ENCODE measurements at regions of chr4 and their contacts with region 1.

Region 1: DNA sequence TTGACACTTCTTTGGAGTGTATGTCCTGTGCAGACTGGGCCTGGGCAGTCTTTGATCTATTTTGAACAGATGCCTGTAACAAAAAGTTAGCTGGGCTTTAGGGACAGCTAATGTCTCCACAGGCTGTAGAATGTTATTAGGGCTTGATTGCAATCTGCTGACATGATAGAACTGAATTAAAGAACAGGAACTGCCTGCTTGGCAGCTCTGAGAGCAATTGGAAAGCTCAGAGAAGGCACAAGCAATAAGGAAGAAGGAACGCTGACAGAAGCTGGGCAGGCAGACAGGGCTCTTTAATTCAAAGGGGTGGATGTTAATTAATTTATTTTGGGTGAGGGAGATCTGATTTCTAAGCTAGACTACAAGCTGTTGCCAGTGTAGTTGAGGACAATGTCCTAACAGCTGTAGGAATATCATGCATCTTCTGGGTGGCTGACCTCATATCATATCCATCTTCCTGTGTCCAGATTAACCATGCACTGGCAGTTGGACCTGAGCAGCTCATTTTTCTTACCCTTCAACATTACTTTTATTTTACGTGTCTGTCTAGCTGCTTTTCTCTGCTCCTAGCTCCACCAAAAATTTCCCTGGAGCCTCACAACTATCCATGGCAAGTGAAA is 20.7 kb upstream of the GRXCR1 start:
- DNase-seq: no peak
- ATAC-seq: no peak
- H3K4me3 ChIP-seq: no peak overlapping the region
- H3K27ac ChIP-seq: no peak overlapping the region
- H3K4me1 ChIP-seq: no peaks in the 10 kb centered on the region
- H3K27me3 ChIP-seq: no peaks in the 10 kb centered on the region
- CTCF ChIP-seq: no peak
- EP300 ChIP-seq: no peak
- POLR2A ChIP-seq: no peak
- RAD21 ChIP-seq: no peak

Region 2: DNA sequence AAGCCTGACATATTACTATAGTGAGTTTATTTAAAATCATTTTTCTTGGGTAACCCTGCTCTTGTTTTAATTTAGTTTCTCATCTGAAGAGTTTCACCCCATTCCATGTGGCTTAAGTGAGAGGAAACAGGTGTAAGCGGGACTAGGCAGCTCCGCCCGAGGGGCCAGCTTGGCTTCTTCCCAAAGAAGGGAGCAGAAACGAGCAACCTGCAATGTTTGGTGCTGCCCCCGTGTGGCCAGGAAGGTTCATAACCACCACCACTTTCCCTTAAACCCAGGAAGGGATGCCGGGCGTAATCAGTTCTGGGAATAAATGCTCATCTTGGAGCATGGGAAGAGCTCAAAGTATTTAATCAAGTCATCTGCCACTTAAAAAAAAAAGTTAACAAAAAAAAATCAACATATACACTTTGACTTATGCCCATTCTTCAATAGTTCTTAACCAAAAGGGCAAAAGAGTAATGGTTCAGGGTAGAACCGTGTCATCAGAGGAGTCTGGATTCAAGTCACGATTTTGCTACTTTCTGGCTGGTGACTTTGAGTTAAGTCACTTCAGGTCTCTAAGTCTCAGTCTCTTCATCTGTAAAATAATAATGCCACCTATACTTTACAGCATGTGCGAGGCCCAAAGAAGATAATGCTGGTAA is 1974.1 kb before region 1 on chr4:
- CTCF ChIA-PET with region 1: no interaction called
- POLR2A ChIA-PET with region 1: no interaction called
- in situ Hi-C with region 1: no loop called
- intact Hi-C with region 1: no loop called
- DNase-seq: peak; percentile 73 to 82 (median 77)
- ATAC-seq: peak; percentile 96
- H3K4me3 ChIP-seq: no peak overlapping the region
- H3K27ac ChIP-seq: no peak overlapping the region
- H3K4me1 ChIP-seq: no peaks in the 10 kb centered on the region
- H3K27me3 ChIP-seq: peaks cover 9 to 21% of the 10 kb centered on the region in 2 experiments; a peak in 4 of 5 replicates
- CTCF ChIP-seq: peak; percentile 67 to 84 (median 75)
- EP300 ChIP-seq: no peak
- POLR2A ChIP-seq: no peak
- RAD21 ChIP-seq: peak; percentile 45 to 60

Region 3: GRCh38 chr4:42568610-42569207 is 303.1 kb before region 1 on chr4:
- CTCF ChIA-PET with region 1: no interaction called
- POLR2A ChIA-PET with region 1: no interaction called
- in situ Hi-C with region 1: loop called (anchors 10 kb)
- intact Hi-C with region 1: no loop called
- DNase-seq: peak; percentile 30 to 73 (median 38)
- ATAC-seq: peak; percentile 94
- H3K4me3 ChIP-seq: no peak overlapping the region
- H3K27ac ChIP-seq: no peak overlapping the region
- H3K4me1 ChIP-seq: no peaks in the 10 kb centered on the region
- H3K27me3 ChIP-seq: no peaks in the 10 kb centered on the region; a peak in 1 of 5 replicates
- CTCF ChIP-seq: peak; percentile 50 to 72 (median 57); a peak in 5 of 6 replicates
- EP300 ChIP-seq: no peak
- POLR2A ChIP-seq: no peak
- RAD21 ChIP-seq: peak; percentile 63 to 73

Region 4: GRCh38 chr4:42915484-42915883 is 43.7 kb after region 1 on chr4:
- CTCF ChIA-PET with region 1: no interaction called
- POLR2A ChIA-PET with region 1: no interaction called
- in situ Hi-C with region 1: no loop called
- intact Hi-C with region 1: no loop called
- DNase-seq: no peak
- ATAC-seq: no peak
- H3K4me3 ChIP-seq: no peak overlapping the region
- H3K27ac ChIP-seq: no peak overlapping the region
- H3K4me1 ChIP-seq: no peaks in the 10 kb centered on the region
- H3K27me3 ChIP-seq: no peaks in the 10 kb centered on the region
- CTCF ChIP-seq: no peak
- EP300 ChIP-seq: no peak
- POLR2A ChIP-seq: no peak
- RAD21 ChIP-seq: no peak